ENCODE measurements at regions of chr19 and their contacts with region 1.

Region 1: DNA sequence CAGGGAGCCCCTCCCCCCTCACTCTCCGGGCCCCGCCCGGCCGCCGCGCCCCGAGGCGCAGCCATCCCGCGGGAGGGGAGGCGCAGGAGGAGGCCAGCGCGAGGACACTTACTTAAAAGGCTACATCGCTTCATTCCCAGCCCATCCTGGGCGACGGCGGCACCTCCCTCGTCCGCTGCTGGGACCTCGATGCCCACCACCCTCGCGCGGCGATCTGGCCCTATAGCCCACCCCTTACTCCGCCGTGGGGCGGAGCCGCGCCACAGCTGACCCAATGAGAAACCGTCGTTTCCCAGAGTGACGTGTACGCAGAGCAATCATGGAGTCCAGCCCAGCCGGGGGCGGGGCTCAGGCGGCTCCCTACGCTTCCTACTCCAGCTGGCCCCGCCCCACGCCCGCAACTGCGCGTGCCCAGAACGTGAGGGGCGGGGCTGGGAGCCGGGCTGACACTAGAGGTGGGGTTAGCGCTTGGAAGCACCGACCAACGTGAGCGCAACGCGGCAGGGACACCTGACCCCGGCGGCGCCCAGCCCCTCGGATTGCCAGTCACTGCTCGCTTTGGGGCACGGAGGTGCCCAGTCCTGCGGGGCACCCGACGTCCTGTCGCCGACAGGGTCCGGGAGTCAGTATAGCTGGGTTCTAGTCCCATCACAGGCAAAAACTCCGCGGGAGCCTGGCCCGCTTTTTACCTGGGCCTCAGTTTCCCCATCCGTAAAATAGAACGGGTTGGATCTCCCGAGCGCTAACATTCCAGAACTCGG is at the start of gene ANKRD27:
- H3K4me3 ChIP-seq: peak within 1 kb of the TSS; percentile 75
- H3K27ac ChIP-seq: peak within 1 kb of the TSS; percentile 82
- H3K4me1 ChIP-seq: peaks cover 26% of the 10 kb centered on the region
- CTCF ChIP-seq: no peak

Region 2: GRCh38 chr19:32611161-32611560 is 64.0 kb before region 1 on chr19:
- CTCF ChIA-PET with region 1: no interaction called
- POLR2A ChIA-PET with region 1: no interaction called
- H3K4me3 ChIP-seq: no peak overlapping the region
- H3K27ac ChIP-seq: no peak overlapping the region
- H3K4me1 ChIP-seq: no peaks in the 10 kb centered on the region
- CTCF ChIP-seq: no peak

Region 3: DNA sequence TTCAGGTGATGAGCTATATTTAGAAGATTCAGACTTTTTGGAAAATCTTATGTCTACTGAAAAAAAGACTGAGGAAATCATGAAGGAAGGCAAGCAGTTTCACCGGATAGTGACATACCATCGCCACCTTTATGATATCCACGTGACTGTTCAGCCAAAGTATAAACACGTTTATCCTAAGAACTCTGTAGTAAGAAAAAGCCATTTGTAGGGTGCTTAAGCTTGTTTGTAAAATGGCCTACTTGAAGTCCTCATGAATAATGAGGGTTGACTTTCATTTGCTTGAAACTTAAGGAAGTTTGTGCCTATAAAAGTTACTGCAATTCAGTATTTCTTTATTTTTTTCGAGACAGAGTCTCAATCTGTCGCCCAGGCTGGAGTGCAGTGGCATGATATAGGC is 36.6 kb after region 1 on chr19:
- CTCF ChIA-PET with region 1: no interaction called
- POLR2A ChIA-PET with region 1: interaction called, 12 read pairs
- H3K4me3 ChIP-seq: no peak overlapping the region
- H3K27ac ChIP-seq: no peak overlapping the region
- H3K4me1 ChIP-seq: no peaks in the 10 kb centered on the region
- CTCF ChIP-seq: no peak

Measured in HEK293 (cell line).